ENCODE measurements at regions of chr3 and their contacts with region 1.

Region 1: DNA sequence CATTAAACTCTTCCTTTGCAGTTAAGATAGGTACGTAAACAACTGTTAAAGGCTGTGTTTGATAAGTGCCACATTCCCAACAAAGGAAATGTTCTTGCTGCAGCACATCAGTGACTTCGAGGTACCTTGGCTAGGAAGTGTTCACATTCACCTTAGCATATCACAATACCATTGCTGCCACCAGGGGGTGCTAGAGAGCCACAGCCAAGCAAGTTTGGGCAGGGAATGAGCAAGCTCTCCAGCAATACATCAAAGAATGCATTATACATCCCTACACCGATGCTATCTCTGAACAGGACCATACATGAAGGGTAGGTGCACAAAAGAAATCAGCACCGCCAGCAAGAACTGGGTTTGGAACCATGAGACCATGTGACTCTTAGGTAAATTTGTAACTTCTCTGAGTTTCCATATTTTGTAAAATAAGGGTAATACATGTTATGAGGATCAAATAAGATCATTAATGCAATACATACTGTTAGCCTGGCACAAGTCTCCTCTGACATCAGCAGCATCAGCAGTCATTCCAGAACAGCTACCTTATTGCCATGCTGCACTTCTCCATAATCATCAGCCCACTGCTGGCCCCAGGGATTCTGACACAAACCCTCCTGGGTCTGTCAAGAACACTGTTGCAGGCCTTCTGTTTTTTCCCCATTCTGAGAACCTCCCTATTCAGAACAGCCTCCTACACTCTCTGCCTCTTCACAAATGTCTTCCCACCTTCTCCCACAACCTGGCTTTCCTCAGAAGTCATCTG is 37.6 kb downstream of the RYK start:
- DNase-seq: peak; percentile 91

Region 2: GRCh38 chr3:134299185-134299887 is 86.2 kb after region 1 on chr3:
- intact Hi-C with region 1: loop called (anchors 2 to 5 kb)
- DNase-seq: no peak

Region 3: DNA sequence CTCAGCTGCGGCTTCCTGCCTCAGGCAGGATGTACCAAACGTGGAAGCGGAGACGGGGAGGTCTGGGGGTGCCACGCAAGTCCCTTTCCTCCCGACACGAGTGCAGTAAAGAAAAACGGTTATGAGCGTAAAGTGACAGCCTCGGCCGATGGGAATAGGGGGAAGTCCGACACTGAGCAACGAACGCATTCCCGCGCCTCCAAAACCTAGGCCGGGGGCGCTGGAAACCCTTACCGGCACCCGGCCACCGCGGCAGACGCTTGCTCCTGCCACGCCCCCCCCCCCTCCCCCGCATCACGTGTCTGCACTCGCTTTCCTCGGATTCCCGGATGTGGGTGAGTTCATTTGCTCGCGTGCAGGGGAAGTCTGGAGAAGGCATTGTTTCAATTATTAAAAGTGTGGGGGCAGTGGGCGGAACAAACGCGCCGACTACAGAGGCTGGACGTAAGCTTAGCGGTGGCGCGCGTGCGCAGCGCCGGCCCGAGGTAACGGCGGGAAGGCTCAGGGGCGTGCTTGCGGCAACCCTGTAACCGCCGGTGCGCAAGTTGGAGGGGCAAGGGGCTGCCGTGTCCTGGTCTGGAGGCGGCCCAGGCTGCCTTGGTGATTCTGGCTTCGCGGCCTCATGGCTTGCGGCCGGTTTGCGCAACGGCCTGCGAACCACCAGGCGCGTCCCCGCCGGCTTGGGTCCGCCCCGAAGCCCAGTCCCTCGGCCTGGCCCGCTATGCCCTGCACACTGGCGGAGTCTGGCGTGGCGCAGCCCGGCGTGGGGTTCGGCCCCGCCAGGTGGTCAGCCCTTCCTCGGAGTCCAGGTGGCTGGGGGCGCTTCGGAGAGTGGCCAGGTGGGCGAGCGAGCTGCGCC is 272.9 kb after region 1 on chr3 and contains the starts of genes ANAPC13 and CEP63:
- intact Hi-C with region 1: loop called in 1 of 2 experiments (anchors 10 kb)
- DNase-seq: peak; percentile 98
- total RNA-seq, gene ANAPC13: 33.5 to 43.5 TPM
- total RNA-seq, gene CEP63: 23.1 to 23.8 TPM

Measured in posterior vena cava (tissue), 2 donors.